ENCODE measurements at regions of chr2 and their contacts with region 1.

Region 1: GRCh38 chr2:225040856-225041206 is 1.4 kb downstream of the DOCK10 start:
- DNase-seq: peak; percentile 24
- CTCF ChIP-seq: no peak

Region 2: DNA sequence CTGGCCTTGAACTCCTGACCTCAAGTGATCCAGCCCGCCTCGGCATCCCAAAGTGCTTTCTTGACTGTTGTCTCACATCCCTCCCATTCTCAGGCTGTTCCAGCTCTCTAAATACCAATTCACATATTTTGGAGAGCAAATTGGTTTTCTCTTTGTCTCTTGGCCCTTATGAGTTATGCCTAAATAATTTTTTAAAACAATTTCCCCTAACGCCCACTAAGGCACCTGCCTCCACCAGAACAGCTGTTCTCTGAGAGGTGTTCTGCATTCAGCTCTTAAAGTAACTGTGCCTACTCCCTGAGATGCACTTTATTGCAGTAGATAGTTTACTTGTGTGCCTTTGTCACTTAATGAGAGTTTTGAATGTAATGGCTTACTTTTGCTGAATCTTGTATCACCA is 331.5 kb before region 1 on chr2:
- CTCF ChIA-PET with region 1: no interaction called
- POLR2A ChIA-PET with region 1: no interaction called
- DNase-seq: no peak
- CTCF ChIP-seq: no peak

Region 3: GRCh38 chr2:225025917-225026571 is 14.8 kb before region 1 on chr2:
- CTCF ChIA-PET with region 1: interaction called, 18 read pairs
- POLR2A ChIA-PET with region 1: no interaction called
- DNase-seq: no peak
- CTCF ChIP-seq: no peak

Region 4: GRCh38 chr2:225056330-225057065 is 15.7 kb after region 1 on chr2:
- CTCF ChIA-PET with region 1: interaction called, 11 read pairs
- POLR2A ChIA-PET with region 1: interaction called, 5 read pairs
- DNase-seq: no peak
- CTCF ChIP-seq: no peak

Measured in GM10248 (cell line).